SK-N-SH (cell line): ENCODE measurements at regions of chr16 and their contacts with region 1.

Region 1: DNA sequence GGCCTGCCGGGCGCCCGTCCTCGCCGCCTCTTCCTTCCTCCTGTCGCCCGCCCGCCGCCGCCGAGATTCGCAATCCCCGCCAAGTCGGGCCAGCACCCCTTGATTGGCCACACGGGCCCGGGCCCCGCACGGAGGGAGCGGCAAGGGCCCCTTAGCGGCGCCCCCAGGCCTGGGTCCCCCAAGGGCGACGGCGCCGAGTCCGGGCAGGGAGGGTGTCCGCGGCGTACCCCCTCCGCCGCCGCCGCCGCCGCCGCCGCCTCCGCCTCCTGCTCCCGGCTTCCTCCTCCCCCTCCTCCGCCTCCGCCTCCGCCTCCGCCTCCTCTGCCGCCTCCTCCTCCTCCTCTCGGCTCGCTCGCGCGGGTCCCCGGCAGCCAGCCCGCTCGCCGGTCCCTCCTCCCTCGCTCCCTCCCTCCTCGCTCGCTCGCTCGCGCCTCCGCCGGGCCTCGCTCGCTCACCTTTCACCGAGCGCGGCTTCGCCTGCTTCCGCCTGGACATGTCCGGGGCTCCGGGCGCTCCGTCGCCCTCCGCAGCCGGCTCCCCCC is 561 bp downstream of the ZNF423 start:
- DNase-seq: peak; percentile 83
- H3K4me3 ChIP-seq: peak overlapping the region; percentile 61 to 68
- H3K27ac ChIP-seq: peak overlapping the region in 1 of 2 experiments; percentile 92; a peak in 2 of 4 replicates
- H3K4me1 ChIP-seq: peaks cover 13 to 46% of the 10 kb centered on the region in 2 experiments; a peak in 3 of 4 replicates
- H3K27me3 ChIP-seq: peaks cover 8% of the 10 kb centered on the region
- CTCF ChIP-seq: no peak
- EP300 ChIP-seq: no peak
- RAD21 ChIP-seq: no peak

Region 2: DNA sequence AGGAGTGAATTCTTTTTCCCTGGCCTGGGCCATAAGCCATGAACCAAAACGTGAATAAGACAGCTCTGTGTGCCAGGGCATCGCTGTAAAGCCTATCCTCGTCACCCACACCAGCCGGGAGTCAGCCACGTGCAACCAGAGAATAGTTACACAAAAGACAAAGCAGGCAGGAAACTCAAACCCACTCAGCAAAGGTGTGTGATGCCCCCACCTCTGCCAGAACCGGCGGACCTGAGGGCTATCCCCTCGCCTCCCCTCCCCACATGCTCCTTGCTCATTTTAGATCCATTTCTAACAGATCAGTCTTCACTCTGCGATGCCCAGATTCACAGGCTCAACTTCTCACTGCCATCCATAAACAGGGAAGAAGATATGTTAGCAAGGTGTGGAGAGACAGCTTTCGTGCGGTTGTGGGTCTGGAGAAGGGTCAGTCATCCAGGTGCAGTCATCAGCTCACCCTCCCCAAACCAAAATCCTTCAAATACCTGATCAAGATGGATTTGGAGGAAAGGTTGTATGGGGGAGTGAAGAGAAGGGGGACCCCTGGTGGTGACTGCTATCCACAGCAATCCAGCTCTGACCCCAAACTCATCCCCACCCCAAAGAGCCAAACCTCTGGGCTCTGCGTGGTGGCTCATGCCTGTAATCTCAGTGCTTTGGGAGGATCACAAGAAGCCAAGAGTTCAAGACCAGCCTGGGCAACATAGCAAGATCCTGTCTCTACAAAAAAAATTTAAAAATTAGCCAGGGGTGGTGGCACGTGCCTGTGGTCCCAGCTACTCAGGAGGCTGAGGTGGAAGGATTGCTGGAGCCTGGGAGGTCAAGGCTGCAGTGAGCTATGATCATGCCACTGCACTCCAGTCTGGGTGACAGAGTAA is 262.6 kb before region 1 on chr16:
- CTCF ChIA-PET with region 1: interaction called, 22 read pairs
- POLR2A ChIA-PET with region 1: no interaction called
- DNase-seq: peak; percentile 79
- H3K4me3 ChIP-seq: no peak overlapping the region; a peak in 1 of 4 replicates
- H3K27ac ChIP-seq: peak overlapping the region in 1 of 2 experiments; percentile 66; a peak in 2 of 4 replicates
- H3K4me1 ChIP-seq: peaks cover 11 to 67% of the 10 kb centered on the region in 2 experiments; a peak in 3 of 4 replicates
- H3K27me3 ChIP-seq: no peaks in the 10 kb centered on the region
- CTCF ChIP-seq: peak; percentile 81
- EP300 ChIP-seq: no peak
- RAD21 ChIP-seq: peak; percentile 68

Region 3: DNA sequence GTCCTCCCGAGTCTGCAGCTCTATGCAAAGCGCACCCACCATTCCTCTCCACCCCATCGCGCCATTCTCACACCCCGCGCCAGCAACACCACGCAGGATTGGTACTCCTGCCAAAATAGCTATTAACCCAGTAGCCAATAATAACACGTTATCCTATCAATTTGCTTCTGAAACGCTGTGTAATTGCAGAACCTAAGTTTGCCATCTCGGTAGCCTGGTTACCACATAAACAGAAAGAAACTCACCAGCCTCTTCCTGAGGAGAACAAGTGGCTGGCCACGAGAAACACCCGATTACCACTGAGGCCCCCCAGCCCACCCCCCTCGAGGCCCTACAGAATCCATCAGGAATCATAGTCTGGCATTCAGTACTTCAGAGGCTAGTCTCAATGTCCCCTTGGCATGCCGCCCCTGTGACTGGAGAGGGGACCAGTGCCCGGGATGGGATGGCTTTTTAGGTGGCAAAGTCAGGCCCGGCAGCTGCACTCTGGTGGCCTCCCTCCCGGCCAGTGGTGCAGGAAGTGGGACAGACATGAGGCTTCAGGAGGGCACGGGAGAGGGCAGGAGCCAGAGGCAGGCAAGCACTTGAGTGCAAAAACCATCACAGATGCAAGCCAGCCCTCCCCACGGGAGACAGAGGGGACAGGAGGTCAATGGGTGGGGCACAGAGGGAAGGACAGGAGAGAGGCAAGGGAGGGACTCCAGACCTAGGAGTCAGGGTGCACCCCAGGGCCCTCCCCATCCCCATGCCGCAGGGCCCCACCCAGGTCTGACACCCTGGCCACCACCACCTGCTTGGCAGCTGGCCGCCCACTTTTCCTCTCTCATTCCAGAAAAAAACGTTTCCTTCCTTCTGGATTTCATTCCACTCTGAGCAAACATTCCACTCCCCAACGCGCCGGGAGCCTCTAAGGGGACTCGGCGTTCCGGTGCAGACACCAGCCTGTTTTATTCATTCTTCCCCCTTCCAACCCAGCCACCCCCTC is 192.0 kb before region 1 on chr16:
- CTCF ChIA-PET with region 1: interaction called, 19 read pairs
- POLR2A ChIA-PET with region 1: interaction called, 6 read pairs
- DNase-seq: peak; percentile 63
- H3K4me3 ChIP-seq: peak overlapping the region in 1 of 2 experiments; percentile 52; a peak in 2 of 4 replicates
- H3K27ac ChIP-seq: peak overlapping the region in 1 of 2 experiments; percentile 99; a peak in 3 of 4 replicates
- H3K4me1 ChIP-seq: peaks cover 0 to 73% of the 10 kb centered on the region in 2 experiments; a peak in 2 of 4 replicates
- H3K27me3 ChIP-seq: no peaks in the 10 kb centered on the region
- CTCF ChIP-seq: no peak
- EP300 ChIP-seq: no peak
- RAD21 ChIP-seq: no peak; the same call in 1 of the 2 replicates

Region 4: DNA sequence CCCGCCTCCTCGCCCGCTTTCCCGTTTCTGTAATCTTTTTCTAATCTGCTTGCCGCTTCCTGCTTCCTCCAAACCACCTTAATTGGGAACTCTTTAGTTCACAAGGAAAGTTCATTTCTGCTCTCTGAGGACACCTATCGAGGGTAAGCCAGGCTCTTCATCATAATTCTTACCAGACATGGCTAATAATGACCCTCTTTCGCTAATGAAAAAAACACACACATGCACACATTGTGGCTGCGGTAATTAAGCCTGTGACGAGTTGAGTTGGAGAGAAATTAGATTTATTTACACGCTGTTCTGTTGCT is 100.1 kb before region 1 on chr16:
- CTCF ChIA-PET with region 1: interaction called, 21 read pairs
- POLR2A ChIA-PET with region 1: no interaction called
- DNase-seq: peak; percentile 69
- H3K4me3 ChIP-seq: no peak overlapping the region
- H3K27ac ChIP-seq: peak overlapping the region in 1 of 2 experiments; percentile 93; a peak in 2 of 4 replicates
- H3K4me1 ChIP-seq: peaks cover 9 to 52% of the 10 kb centered on the region in 2 experiments; a peak in 3 of 4 replicates
- H3K27me3 ChIP-seq: no peaks in the 10 kb centered on the region
- CTCF ChIP-seq: peak; percentile 49
- EP300 ChIP-seq: peak in 1 of 2 experiments; percentile 58; a peak in 1 of 4 replicates
- RAD21 ChIP-seq: peak; percentile 68

Region 5: DNA sequence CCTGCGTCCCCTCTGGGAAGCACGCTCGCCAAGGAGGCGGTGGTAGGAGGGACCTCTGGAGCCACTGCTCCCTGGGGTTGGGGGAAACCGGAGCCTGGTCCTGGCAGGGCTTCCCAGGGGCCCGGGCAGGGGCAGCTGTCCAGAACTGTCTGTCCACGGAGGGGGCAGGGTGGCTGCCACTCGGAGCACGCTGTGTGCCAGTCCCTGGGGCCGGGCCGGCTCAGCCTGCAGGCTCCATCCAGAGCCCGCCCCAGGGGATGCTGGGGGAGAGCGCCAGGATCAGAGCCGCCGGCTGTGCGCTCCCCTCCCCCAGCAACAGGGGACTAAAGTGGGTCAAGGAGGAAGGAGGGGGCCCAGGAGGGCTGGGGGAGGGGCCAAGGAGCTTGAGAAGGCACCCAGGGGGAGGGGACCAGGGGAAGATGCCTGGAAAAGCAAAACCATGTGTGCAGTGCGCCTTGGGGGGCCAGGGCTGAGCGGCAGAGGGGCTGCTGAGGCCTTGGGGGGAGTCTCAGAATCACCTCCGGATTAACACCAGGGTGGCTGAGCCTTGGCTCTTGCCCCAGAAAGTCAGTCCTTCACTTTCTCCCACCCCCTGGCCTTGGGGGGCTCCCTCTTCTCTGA is 20.7 kb before region 1 on chr16:
- CTCF ChIA-PET with region 1: interaction called, 12 read pairs
- POLR2A ChIA-PET with region 1: no interaction called
- DNase-seq: peak; percentile 81
- H3K4me3 ChIP-seq: no peak overlapping the region
- H3K27ac ChIP-seq: peak overlapping the region in 1 of 2 experiments; percentile 88; a peak in 2 of 4 replicates
- H3K4me1 ChIP-seq: peaks cover 0 to 49% of the 10 kb centered on the region in 2 experiments; a peak in 2 of 4 replicates
- H3K27me3 ChIP-seq: no peaks in the 10 kb centered on the region
- CTCF ChIP-seq: no peak
- EP300 ChIP-seq: no peak
- RAD21 ChIP-seq: no peak

Region 6: GRCh38 chr16:49884033-49885015 is 29.0 kb after region 1 on chr16:
- CTCF ChIA-PET with region 1: interaction called, 13 read pairs
- POLR2A ChIA-PET with region 1: no interaction called
- DNase-seq: peak; percentile 50
- H3K4me3 ChIP-seq: no peak overlapping the region
- H3K27ac ChIP-seq: no peak overlapping the region
- H3K4me1 ChIP-seq: peaks cover 0 to 11% of the 10 kb centered on the region in 2 experiments; a peak in 1 of 4 replicates
- H3K27me3 ChIP-seq: no peaks in the 10 kb centered on the region
- CTCF ChIP-seq: no peak
- EP300 ChIP-seq: no peak
- RAD21 ChIP-seq: no peak